ENCODE measurements at regions of chr15 and their contacts with region 1.

Region 1: GRCh38 chr15:39580117-39580484 is 778 bp upstream of the THBS1 start:
- DNase-seq: peak; percentile 93
- H3K4me3 ChIP-seq: peak overlapping the region; percentile 7 to 61 (median 55)
- H3K27ac ChIP-seq: peak overlapping the region; percentile 98
- H3K4me1 ChIP-seq: peaks cover 20% of the 10 kb centered on the region
- H3K27me3 ChIP-seq: no peaks in the 10 kb centered on the region
- CTCF ChIP-seq: peak; percentile 93 to 96
- POLR2A ChIP-seq: peak; percentile 74

Region 2: DNA sequence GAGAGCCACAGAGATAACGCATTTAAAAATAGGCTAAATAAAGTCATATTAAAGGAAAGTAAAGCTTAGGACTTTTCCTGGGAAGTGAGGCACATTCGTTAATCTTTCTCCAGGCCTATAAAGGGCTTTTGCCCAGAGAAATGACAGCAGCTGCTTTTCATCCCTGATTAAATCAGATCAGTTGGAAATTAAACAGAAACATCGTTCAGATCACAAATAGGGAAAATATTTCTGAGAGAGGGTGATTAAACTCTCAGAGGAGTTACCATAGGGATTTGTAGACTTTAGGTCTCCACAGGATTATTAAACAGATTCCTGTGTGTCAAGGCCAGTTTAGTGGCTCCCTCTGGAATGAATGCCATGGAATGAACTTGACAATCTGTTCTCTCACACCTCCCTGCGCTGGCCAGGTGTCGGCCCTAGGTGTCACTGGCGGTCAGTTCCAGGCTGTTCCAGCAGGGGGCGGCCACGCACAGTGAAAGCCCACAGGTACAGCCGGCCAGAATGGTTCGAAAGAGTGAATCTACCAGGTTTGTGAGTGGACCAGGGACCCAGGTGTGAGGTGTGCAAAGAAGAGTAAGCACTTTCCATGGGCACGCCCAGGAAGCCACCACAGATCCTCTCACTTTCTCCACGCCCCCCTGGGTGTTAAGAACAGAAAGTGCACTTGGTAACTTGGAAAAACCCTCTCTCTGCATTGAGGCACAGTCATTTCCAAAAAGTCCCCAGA is 762.5 kb before region 1 on chr15:
- CTCF ChIA-PET with region 1: interaction called, 4 read pairs
- POLR2A ChIA-PET with region 1: no interaction called
- dilution Hi-C with region 1: no loop called
- intact Hi-C with region 1: loop called (anchors 1 kb)
- DNase-seq: peak; percentile 86
- H3K4me3 ChIP-seq: no peak overlapping the region
- H3K27ac ChIP-seq: peak overlapping the region; percentile 36
- H3K4me1 ChIP-seq: peaks cover 17% of the 10 kb centered on the region
- H3K27me3 ChIP-seq: no peaks in the 10 kb centered on the region
- CTCF ChIP-seq: peak; percentile 98 to 99
- POLR2A ChIP-seq: no peak

Region 3: DNA sequence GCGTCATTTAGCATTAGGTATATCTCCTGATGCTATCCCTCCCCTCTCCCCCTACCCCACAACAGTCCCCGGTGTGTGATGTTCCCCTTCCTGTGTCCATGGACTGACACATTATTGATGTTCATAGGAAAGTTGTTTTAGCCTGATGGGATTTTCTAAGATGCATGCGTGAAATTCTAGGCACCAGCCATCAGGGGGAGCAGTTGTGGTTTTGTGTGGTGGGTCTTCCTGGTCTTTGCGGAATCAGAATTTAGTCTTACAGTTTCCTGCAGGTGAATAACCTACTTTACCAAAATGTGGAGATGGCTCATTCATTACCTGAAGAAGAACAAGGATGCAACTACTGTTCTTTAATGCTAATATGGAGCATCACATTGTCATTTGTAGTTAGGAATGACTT is 454.2 kb before region 1 on chr15:
- CTCF ChIA-PET with region 1: interaction called, 20 read pairs
- POLR2A ChIA-PET with region 1: interaction called, 118 read pairs
- dilution Hi-C with region 1: no loop called
- intact Hi-C with region 1: loop called (anchors 1 kb)
- DNase-seq: peak; percentile 75
- H3K4me3 ChIP-seq: no peak overlapping the region
- H3K27ac ChIP-seq: peak overlapping the region; percentile 90
- H3K4me1 ChIP-seq: peaks cover 63% of the 10 kb centered on the region
- H3K27me3 ChIP-seq: no peaks in the 10 kb centered on the region
- CTCF ChIP-seq: peak; percentile 68 to 74
- POLR2A ChIP-seq: no peak

Region 4: DNA sequence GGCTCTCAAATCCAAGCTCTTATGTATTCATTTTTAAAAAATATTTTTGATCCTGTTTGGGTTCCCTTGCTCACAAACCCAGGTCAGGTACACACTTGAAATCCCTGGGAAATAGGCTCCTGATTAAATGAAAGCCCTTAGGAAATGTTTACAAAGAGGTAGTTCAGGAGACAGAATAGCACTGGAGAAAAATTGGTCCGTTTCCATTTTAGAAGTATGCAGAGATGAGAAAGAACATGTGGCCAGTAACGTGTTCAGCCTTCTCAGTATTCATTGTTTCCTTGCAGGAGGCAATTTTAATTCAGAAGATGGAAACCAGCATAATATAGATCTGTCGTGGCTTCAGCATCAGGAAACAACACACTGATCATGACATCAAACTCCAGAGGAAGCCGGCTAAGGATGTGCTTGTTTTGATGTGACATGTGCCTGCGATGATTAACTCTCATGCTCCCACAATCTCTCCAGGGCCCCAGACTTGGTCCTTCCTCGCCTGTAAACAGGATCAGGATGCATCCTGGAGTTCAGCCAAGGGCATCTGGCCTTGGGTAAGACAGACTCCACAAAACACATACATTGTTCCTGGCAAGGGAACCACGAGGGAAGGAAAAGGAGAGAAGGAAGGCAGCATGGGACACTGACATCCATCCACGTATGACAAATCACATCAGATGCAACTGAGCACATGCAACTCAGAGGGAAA is 349.7 kb before region 1 on chr15:
- CTCF ChIA-PET with region 1: no interaction called
- POLR2A ChIA-PET with region 1: interaction called, 4 read pairs
- dilution Hi-C with region 1: no loop called
- intact Hi-C with region 1: loop called (anchors 1 kb)
- DNase-seq: peak; percentile 100
- H3K4me3 ChIP-seq: no peak overlapping the region
- H3K27ac ChIP-seq: peak overlapping the region; percentile 93
- H3K4me1 ChIP-seq: peaks cover 49% of the 10 kb centered on the region
- H3K27me3 ChIP-seq: no peaks in the 10 kb centered on the region
- CTCF ChIP-seq: no peak
- POLR2A ChIP-seq: no peak

Region 5: GRCh38 chr15:39301589-39301999 is 278.5 kb before region 1 on chr15:
- CTCF ChIA-PET with region 1: interaction called, 3 read pairs
- POLR2A ChIA-PET with region 1: interaction called, 6 read pairs
- dilution Hi-C with region 1: no loop called
- intact Hi-C with region 1: loop called (anchors 1 kb)
- DNase-seq: peak; percentile 37
- H3K4me3 ChIP-seq: no peak overlapping the region
- H3K27ac ChIP-seq: peak overlapping the region; percentile 92
- H3K4me1 ChIP-seq: peaks cover 31% of the 10 kb centered on the region
- H3K27me3 ChIP-seq: no peaks in the 10 kb centered on the region
- CTCF ChIP-seq: no peak
- POLR2A ChIP-seq: no peak

Region 6: GRCh38 chr15:39594056-39594763 is 14.1 kb after region 1 on chr15:
- CTCF ChIA-PET with region 1: no interaction called
- POLR2A ChIA-PET with region 1: interaction called, 24 read pairs
- dilution Hi-C with region 1: no loop called
- intact Hi-C with region 1: no loop called
- DNase-seq: peak; percentile 64
- H3K4me3 ChIP-seq: peak overlapping the region in 1 of 3 experiments; percentile 27
- H3K27ac ChIP-seq: no peak overlapping the region
- H3K4me1 ChIP-seq: no peaks in the 10 kb centered on the region
- H3K27me3 ChIP-seq: no peaks in the 10 kb centered on the region
- CTCF ChIP-seq: no peak
- POLR2A ChIP-seq: peak; percentile 96